GM12878 (cell line): ENCODE measurements at regions of chr16 and their contacts with region 1.

Region 1: GRCh38 chr16:8374586-8375231 is 215.6 kb downstream of the TMEM114 start:
- DNase-seq: no peak
- ATAC-seq: no peak
- H3K4me3 ChIP-seq: no peak overlapping the region
- H3K27ac ChIP-seq: no peak overlapping the region
- H3K4me1 ChIP-seq: no peaks in the 10 kb centered on the region
- H3K27me3 ChIP-seq: no peaks in the 10 kb centered on the region
- CTCF ChIP-seq: no peak
- EP300 ChIP-seq: no peak
- POLR2A ChIP-seq: no peak
- RAD21 ChIP-seq: no peak

Region 2: GRCh38 chr16:8295513-8296237 is 79.0 kb before region 1 on chr16:
- CTCF ChIA-PET with region 1: no interaction called
- POLR2A ChIA-PET with region 1: no interaction called
- RAD21 ChIA-PET with region 1: no interaction called
- SMC1A ChIA-PET with region 1: no interaction called
- in situ Hi-C with region 1: no loop called
- intact Hi-C with region 1: no loop called
- DNase-seq: no peak
- ATAC-seq: no peak
- H3K4me3 ChIP-seq: no peak overlapping the region
- H3K27ac ChIP-seq: no peak overlapping the region
- H3K4me1 ChIP-seq: no peaks in the 10 kb centered on the region
- H3K27me3 ChIP-seq: no peaks in the 10 kb centered on the region
- CTCF ChIP-seq: no peak
- EP300 ChIP-seq: no peak
- POLR2A ChIP-seq: no peak
- RAD21 ChIP-seq: no peak

Region 3: GRCh38 chr16:8729779-8730334 is 355.1 kb after region 1 on chr16:
- CTCF ChIA-PET with region 1: no interaction called
- POLR2A ChIA-PET with region 1: no interaction called
- RAD21 ChIA-PET with region 1: no interaction called
- SMC1A ChIA-PET with region 1: no interaction called
- in situ Hi-C with region 1: loop called (anchors 25 kb)
- intact Hi-C with region 1: no loop called
- DNase-seq: no peak
- ATAC-seq: peak; percentile 55
- H3K4me3 ChIP-seq: no peak overlapping the region
- H3K27ac ChIP-seq: no peak overlapping the region
- H3K4me1 ChIP-seq: no peaks in the 10 kb centered on the region
- H3K27me3 ChIP-seq: no peaks in the 10 kb centered on the region
- CTCF ChIP-seq: no peak
- EP300 ChIP-seq: no peak
- POLR2A ChIP-seq: no peak
- RAD21 ChIP-seq: no peak

Region 4: GRCh38 chr16:8998114-8998513 is 623.4 kb after region 1 on chr16:
- CTCF ChIA-PET with region 1: no interaction called
- POLR2A ChIA-PET with region 1: no interaction called
- RAD21 ChIA-PET with region 1: no interaction called
- SMC1A ChIA-PET with region 1: no interaction called
- in situ Hi-C with region 1: loop called (anchors 25 kb)
- intact Hi-C with region 1: no loop called
- DNase-seq: no peak
- ATAC-seq: no peak
- H3K4me3 ChIP-seq: no peak overlapping the region
- H3K27ac ChIP-seq: no peak overlapping the region
- H3K4me1 ChIP-seq: no peaks in the 10 kb centered on the region
- H3K27me3 ChIP-seq: no peaks in the 10 kb centered on the region
- CTCF ChIP-seq: no peak
- EP300 ChIP-seq: no peak
- POLR2A ChIP-seq: no peak
- RAD21 ChIP-seq: no peak